Stomach (tissue), 19 donors: ENCODE measurements at regions of chr19 and their contacts with region 1.

Region 1: DNA sequence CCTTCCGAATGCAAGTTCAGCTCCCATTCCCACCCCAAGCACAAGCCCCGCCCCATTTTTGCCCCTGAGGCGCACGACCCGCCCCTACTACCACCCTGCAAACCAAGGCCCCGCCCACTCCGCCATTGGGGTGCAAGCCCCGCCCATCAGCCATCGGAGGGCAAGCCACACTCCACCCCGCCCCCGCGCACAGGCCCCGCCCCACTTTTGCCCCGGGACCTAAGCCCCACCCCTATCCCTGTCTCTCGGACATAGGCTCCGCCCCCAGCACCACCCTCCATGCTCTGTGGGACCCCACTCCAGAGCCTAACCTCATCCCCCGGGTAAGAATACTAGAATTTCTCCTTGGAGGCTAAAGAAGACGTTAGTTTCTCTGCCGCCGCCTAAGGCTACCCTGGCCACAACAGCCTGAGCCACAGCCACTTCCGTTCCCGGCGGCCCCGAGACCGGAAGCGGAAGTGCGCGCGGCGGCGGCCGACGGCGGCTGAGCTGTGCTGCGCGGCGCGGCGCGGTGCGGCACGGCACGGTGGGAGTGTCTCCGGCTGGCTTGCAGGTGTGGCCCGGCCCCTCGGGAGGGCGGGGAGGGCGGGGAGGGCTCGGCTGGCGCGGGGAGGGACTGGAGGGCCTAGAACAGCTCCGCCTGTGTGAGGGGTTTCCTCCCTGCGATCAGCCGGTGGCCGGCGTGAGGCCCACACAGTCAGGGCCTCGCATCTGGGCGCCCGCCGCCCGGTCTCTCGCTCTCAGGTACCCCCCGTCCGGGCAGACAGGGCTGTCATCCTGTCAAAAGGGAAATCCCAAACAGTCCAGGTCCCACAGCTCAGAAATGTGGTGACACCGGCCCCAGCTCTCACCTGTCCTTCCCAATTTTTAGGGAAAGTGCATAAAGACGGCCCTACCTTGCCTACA is at the start of gene ZNF333:
- DNase-seq: peak; percentile 97 to 98
- H3K4me3 ChIP-seq: peak within 1 kb of the TSS; percentile 77 to 88 (median 84)
- H3K27ac ChIP-seq: peak within 1 kb of the TSS; percentile 92 to 100 (median 95)
- H3K4me1 ChIP-seq: peaks cover 7 to 23% (median 19%) of the 10 kb centered on the region in 4 donors
- H3K27me3 ChIP-seq: no peaks in the 10 kb centered on the region
- CTCF ChIP-seq: no peak
- EP300 ChIP-seq: no peak
- POLR2A ChIP-seq: no peak
- total RNA-seq, gene ZNF333: 3.8 to 25.9 (median 5.8) TPM

Region 2: GRCh38 chr19:14563989-14564651 is 125.7 kb before region 1 on chr19:
- intact Hi-C with region 1: loop called (anchors 10 kb)
- DNase-seq: peak in 1 of 2 donors; percentile 57
- H3K4me3 ChIP-seq: no peak overlapping the region
- H3K27ac ChIP-seq: no peak overlapping the region
- H3K4me1 ChIP-seq: peaks cover 12 to 47% (median 41%) of the 10 kb centered on the region in 4 donors
- H3K27me3 ChIP-seq: no peaks in the 10 kb centered on the region
- CTCF ChIP-seq: no peak
- EP300 ChIP-seq: no peak
- POLR2A ChIP-seq: no peak